ENCODE measurements at regions of chr3 and their contacts with region 1.

Region 1: DNA sequence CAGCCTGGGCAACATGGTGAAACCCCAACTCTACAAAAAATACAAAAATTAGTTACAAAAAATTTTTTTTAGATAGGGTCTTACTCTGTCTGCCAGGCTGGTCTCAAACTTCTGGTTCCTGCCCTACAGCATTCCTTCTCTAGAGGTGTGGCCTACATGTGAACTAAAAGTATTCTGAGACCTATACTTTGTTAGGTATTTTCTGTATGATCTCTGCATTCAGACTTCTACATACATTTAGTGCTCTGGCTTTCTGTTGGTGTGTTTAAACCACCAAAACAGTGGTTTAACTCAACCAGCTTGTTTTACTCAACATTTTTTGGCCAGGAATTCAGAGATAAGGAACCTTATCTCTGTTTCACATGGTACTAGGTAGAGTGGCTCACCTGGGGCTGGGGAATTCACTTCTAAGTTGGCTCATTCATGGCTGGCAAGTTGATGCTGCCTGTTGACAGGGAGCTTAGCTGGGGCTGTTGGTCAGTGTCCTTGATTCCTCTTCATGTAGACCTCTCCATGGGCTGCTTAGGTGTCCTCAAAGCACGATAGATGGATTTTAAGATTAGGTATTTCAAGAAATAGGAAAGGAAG is 41.4 kb upstream of the BSN start:
- DNase-seq: no peak
- ATAC-seq: no peak
- H3K4me3 ChIP-seq: no peak overlapping the region
- H3K27ac ChIP-seq: no peak overlapping the region
- H3K4me1 ChIP-seq: no peaks in the 10 kb centered on the region; a peak in 1 of 5 replicates
- H3K27me3 ChIP-seq: no peaks in the 10 kb centered on the region
- CTCF ChIP-seq: no peak
- EP300 ChIP-seq: no peak
- POLR2A ChIP-seq: no peak
- RAD21 ChIP-seq: no peak

Region 2: GRCh38 chr3:49500732-49501609 is 11.9 kb before region 1 on chr3:
- CTCF ChIA-PET with region 1: no interaction called
- POLR2A ChIA-PET with region 1: interaction called, 13 read pairs
- in situ Hi-C with region 1: no loop called
- intact Hi-C with region 1: no loop called
- DNase-seq: peak; percentile 27 to 80 (median 50)
- ATAC-seq: peak; percentile 92
- H3K4me3 ChIP-seq: peak overlapping the region; percentile 8; the same call in 1 of the 2 replicates
- H3K27ac ChIP-seq: peak overlapping the region; percentile 98
- H3K4me1 ChIP-seq: peaks cover 9 to 19% of the 10 kb centered on the region in 2 experiments
- H3K27me3 ChIP-seq: no peaks in the 10 kb centered on the region
- CTCF ChIP-seq: no peak
- EP300 ChIP-seq: peak; percentile 56
- POLR2A ChIP-seq: no peak
- RAD21 ChIP-seq: no peak

Region 3: DNA sequence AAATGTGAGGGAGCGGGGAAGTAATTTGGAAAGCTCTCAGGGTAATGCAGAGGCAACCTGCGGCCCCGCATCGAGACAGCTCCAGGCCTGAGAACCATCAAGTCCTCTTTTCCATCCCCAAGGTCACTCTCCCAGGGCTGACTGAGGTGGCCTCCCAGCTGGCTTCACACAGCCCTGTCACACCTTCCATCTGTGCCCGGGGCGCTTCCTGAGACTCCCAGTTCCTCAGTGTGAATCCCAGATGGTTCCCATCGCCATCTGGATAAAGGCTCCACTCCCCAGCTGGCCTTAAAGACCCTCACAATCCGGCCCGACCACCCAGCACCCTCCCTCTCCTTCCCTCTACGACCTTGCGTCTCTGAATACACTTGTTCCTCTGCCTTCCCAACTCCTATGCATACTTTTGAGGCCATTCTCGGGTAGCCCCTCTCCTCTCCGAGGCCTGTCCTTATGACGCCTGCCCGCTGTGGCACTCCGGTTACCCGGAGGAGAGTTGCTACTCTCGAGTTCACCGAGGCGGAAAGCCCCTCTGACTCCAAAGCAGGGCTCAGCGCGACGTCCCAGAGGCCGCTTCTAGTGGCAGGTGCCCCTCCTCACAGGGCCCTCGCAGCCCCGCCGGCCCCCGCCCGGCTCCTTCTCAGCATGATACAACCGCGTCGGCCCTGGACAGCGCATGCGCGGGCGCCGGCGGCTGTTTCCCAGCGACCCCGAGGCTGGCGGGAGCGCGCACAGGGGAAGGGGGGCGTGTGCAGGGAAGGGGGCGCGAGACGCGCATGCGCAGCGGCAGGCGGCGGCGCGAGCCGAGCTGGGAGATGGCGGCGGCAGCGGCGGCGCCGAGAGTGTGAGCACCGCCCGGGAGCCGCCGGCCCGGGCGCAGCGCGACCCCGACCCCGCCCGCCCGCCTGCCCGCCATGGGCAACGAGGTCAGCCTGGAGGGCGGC is 41.1 kb after region 1 on chr3 and contains the start of gene BSN:
- CTCF ChIA-PET with region 1: no interaction called
- POLR2A ChIA-PET with region 1: no interaction called
- in situ Hi-C with region 1: no loop called
- intact Hi-C with region 1: no loop called
- DNase-seq: peak; percentile 92 to 99 (median 98)
- ATAC-seq: peak; percentile 94
- H3K4me3 ChIP-seq: peak within 1 kb of the TSS; percentile 52
- H3K27ac ChIP-seq: peak within 1 kb of the TSS; percentile 54
- H3K4me1 ChIP-seq: peaks cover 14 to 27% of the 10 kb centered on the region in 2 experiments; a peak in 4 of 5 replicates
- H3K27me3 ChIP-seq: no peaks in the 10 kb centered on the region
- CTCF ChIP-seq: no peak
- EP300 ChIP-seq: no peak
- POLR2A ChIP-seq: peak; percentile 55; the same call in 1 of the 2 replicates
- RAD21 ChIP-seq: no peak
- polyA plus RNA-seq, gene BSN: 0.03 to 0.06 TPM

Region 4: GRCh38 chr3:49733551-49733950 is 220.7 kb after region 1 on chr3:
- CTCF ChIA-PET with region 1: no interaction called
- POLR2A ChIA-PET with region 1: no interaction called
- in situ Hi-C with region 1: no loop called
- intact Hi-C with region 1: no loop called
- DNase-seq: no peak
- ATAC-seq: no peak
- H3K4me3 ChIP-seq: no peak overlapping the region
- H3K27ac ChIP-seq: no peak overlapping the region
- H3K4me1 ChIP-seq: no peaks in the 10 kb centered on the region; a peak in 1 of 5 replicates
- H3K27me3 ChIP-seq: no peaks in the 10 kb centered on the region
- CTCF ChIP-seq: no peak
- EP300 ChIP-seq: no peak
- POLR2A ChIP-seq: no peak
- RAD21 ChIP-seq: no peak